ENCODE measurements at regions of chr19 and their contacts with region 1.

Region 1: GRCh38 chr19:28737021-28737895 is 475.7 kb downstream of the UQCRFS1 start:
- DNase-seq: no peak
- H3K4me3 Mint-ChIP-seq: no peak overlapping the region
- H3K27ac Mint-ChIP-seq: no peak overlapping the region
- H3K4me1 Mint-ChIP-seq: no peaks in the 10 kb centered on the region
- H3K27me3 Mint-ChIP-seq: peaks cover 1% of the 10 kb centered on the region

Region 2: DNA sequence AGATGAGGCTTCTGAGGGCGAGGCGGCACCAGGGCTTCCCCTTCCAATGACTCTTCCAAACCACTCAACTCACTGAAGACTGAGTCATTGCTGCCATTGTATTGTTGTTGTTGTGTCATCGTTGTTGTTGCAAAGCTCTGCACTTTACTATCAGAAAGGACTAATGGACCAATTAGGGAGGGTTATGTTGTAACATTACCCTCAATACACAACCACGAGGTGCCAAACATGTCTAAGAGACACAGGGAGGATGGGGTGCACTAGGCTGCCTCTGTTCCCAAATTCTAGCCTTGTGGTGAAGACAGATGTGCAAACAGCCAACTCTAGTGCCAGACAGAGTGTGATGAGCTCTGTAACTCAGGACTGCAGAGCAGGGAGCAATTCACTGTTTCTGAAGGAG is 599.5 kb before region 1 on chr19:
- CTCF ChIA-PET with region 1: no interaction called
- POLR2A ChIA-PET with region 1: no interaction called
- intact Hi-C with region 1: no loop called
- DNase-seq: no peak
- H3K4me3 Mint-ChIP-seq: no peak overlapping the region
- H3K27ac Mint-ChIP-seq: no peak overlapping the region
- H3K4me1 Mint-ChIP-seq: no peaks in the 10 kb centered on the region
- H3K27me3 Mint-ChIP-seq: no peaks in the 10 kb centered on the region

Region 3: GRCh38 chr19:28878862-28879566 is 141.8 kb after region 1 on chr19:
- CTCF ChIA-PET with region 1: interaction called, 11 read pairs
- POLR2A ChIA-PET with region 1: no interaction called
- intact Hi-C with region 1: loop called (anchors 1 kb)
- DNase-seq: peak; percentile 64
- H3K4me3 Mint-ChIP-seq: no peak overlapping the region
- H3K27ac Mint-ChIP-seq: no peak overlapping the region
- H3K4me1 Mint-ChIP-seq: no peaks in the 10 kb centered on the region
- H3K27me3 Mint-ChIP-seq: peaks cover 2% of the 10 kb centered on the region

Measured in activated CD4-positive, alpha-beta memory T cell treated with anti-CD3 and anti-CD28 coated beads for 36 hours (primary cell).